CD4-positive, alpha-beta T cell (primary cell): ENCODE measurements at regions of chr4 and their contacts with region 1.

Region 1: DNA sequence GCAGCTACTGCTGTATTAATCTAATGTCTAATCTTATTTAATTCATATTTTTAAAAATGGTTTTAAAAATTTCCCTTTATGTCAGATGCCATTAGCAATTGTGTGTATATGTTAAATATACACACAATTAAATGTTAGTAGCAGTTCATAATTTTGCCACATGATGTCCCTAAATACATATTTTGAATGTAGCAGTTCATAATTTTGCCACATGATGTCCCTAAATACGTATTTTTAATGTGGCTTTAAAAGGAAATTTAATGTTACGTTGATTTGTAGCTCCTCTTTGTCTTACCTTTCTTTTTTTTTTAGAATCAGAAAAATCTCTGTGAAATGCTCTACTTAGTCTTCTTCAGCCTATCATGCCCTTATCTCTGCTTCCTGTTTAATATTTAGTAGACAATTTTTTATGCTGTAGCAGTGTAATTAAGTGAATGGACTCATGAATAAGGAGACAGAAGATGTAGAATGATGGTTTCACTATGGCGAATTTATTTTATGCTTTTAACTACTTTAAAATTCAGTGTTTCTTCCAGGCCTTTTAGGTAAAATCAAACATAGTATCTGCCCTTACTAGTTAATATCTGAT is 26.1 kb downstream of the RBM46 start:
- DNase-seq: peak in 3 of 14 experiments; percentile 13 to 17 (median 15)
- ATAC-seq: no peak
- H3K4me3 ChIP-seq: no peak overlapping the region
- H3K4me3 Mint-ChIP-seq: no peak overlapping the region
- H3K27ac ChIP-seq: no peak overlapping the region
- H3K27ac Mint-ChIP-seq: no peak overlapping the region
- H3K4me1 ChIP-seq: no peaks in the 10 kb centered on the region
- H3K4me1 Mint-ChIP-seq: no peaks in the 10 kb centered on the region
- H3K27me3 ChIP-seq: no peaks in the 10 kb centered on the region
- H3K27me3 Mint-ChIP-seq: peaks cover 14% of the 10 kb centered on the region
- CTCF ChIP-seq: peak; percentile 38

Region 2: GRCh38 chr4:154854362-154854761 is 47.2 kb after region 1 on chr4:
- CTCF ChIA-PET with region 1: no interaction called
- POLR2A ChIA-PET with region 1: no interaction called
- intact Hi-C with region 1: no loop called
- DNase-seq: no peak
- ATAC-seq: no peak
- H3K4me3 ChIP-seq: no peak overlapping the region
- H3K4me3 Mint-ChIP-seq: no peak overlapping the region
- H3K27ac ChIP-seq: no peak overlapping the region
- H3K27ac Mint-ChIP-seq: no peak overlapping the region
- H3K4me1 ChIP-seq: no peaks in the 10 kb centered on the region
- H3K4me1 Mint-ChIP-seq: no peaks in the 10 kb centered on the region
- H3K27me3 ChIP-seq: no peaks in the 10 kb centered on the region
- H3K27me3 Mint-ChIP-seq: peaks cover 17% of the 10 kb centered on the region
- CTCF ChIP-seq: no peak

Region 3: GRCh38 chr4:155376387-155377268 is 569.5 kb after region 1 on chr4 and contains the start of gene MAP9:
- CTCF ChIA-PET with region 1: no interaction called
- POLR2A ChIA-PET with region 1: no interaction called
- intact Hi-C with region 1: loop called in 1 of 2 experiments (anchors 10 kb)
- DNase-seq: peak; percentile 76 to 98 (median 83)
- ATAC-seq: peak; percentile 88
- H3K4me3 ChIP-seq: peak within 1 kb of the TSS; percentile 70
- H3K4me3 Mint-ChIP-seq: peak within 1 kb of the TSS; percentile 86
- H3K27ac ChIP-seq: peak within 1 kb of the TSS; percentile 62 to 82
- H3K27ac Mint-ChIP-seq: peak within 1 kb of the TSS; percentile 88
- H3K4me1 ChIP-seq: no peaks in the 10 kb centered on the region
- H3K4me1 Mint-ChIP-seq: peaks cover 22% of the 10 kb centered on the region
- H3K27me3 ChIP-seq: no peaks in the 10 kb centered on the region
- H3K27me3 Mint-ChIP-seq: no peaks in the 10 kb centered on the region
- CTCF ChIP-seq: no peak
- total RNA-seq, gene MAP9: 15.5 to 16.5 TPM